ENCODE measurements at regions of chr6 and their contacts with region 1.

Region 1: GRCh38 chr6:5302995-5303622 is 41.8 kb downstream of the FARS2 start:
- DNase-seq: peak; percentile 87
- H3K4me3 ChIP-seq: no peak overlapping the region
- H3K27ac ChIP-seq: peak overlapping the region; percentile 34 to 62 (median 54)
- H3K4me1 ChIP-seq: peaks cover 14 to 19% of the 10 kb centered on the region in 2 donors
- H3K27me3 ChIP-seq: no peaks in the 10 kb centered on the region
- CTCF ChIP-seq: peak; percentile 27 to 85 (median 77)
- POLR2A ChIP-seq: no peak

Region 2: DNA sequence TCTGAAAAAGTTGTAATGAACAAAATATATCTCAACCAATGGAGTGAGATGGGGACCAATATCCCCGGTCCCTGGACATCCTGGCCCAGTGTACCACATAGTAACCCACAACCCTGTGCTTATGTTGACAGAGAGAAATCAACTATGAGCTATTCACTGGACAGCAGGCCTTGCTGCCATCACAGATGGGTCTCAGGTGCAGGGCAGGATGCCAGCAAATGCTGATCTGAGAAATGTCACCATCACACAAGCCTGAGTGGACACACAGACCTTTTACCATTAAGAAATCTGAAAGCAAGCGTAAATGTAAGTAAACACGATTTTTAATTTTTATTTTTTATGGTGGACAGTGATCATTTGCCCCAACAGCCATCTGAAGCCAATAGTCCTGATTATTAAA is 308.4 kb before region 1 on chr6:
- intact Hi-C with region 1: no loop called
- DNase-seq: no peak
- H3K4me3 ChIP-seq: no peak overlapping the region
- H3K27ac ChIP-seq: no peak overlapping the region
- H3K4me1 ChIP-seq: no peaks in the 10 kb centered on the region
- H3K27me3 ChIP-seq: no peaks in the 10 kb centered on the region
- CTCF ChIP-seq: no peak
- POLR2A ChIP-seq: no peak

Region 3: DNA sequence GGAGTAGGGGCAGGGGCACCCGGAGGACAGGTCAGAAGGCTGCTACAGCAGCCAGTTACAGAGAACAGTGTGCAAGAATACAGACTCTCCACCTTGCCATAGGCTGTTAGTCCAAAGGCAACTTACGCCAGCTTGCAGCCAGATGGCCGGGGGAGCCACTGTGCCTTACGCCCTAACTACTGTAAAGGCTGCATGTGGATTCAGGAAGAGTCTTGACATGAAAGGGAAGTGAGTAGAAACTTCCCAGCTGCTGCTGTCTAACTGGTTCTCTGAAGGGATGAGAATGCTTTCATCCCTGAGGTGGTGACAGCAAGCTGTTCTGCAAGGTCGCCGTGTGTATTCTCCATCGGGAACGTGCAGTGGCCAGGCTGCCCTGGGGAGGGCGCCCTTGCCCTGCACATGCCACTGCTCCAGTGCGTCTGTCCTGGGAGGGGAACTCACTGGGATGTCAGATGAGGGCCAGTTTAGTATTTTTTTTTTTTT is 88.5 kb before region 1 on chr6:
- intact Hi-C with region 1: loop called (anchors 10 kb)
- DNase-seq: peak; percentile 78
- H3K4me3 ChIP-seq: no peak overlapping the region
- H3K27ac ChIP-seq: peak overlapping the region; percentile 31 to 67 (median 43)
- H3K4me1 ChIP-seq: peaks cover 30 to 48% of the 10 kb centered on the region in 2 donors
- H3K27me3 ChIP-seq: no peaks in the 10 kb centered on the region
- CTCF ChIP-seq: peak; percentile 32 to 96 (median 84)
- POLR2A ChIP-seq: no peak

Region 4: GRCh38 chr6:5229356-5229755 is 73.8 kb before region 1 on chr6:
- intact Hi-C with region 1: no loop called
- DNase-seq: no peak
- H3K4me3 ChIP-seq: no peak overlapping the region
- H3K27ac ChIP-seq: no peak overlapping the region
- H3K4me1 ChIP-seq: peaks cover 3 to 7% of the 10 kb centered on the region in 2 donors
- H3K27me3 ChIP-seq: no peaks in the 10 kb centered on the region
- CTCF ChIP-seq: no peak
- POLR2A ChIP-seq: no peak